Head of caudate nucleus (tissue), 42 donors: ENCODE measurements at regions of chr6 and their contacts with region 1.

Region 1: GRCh38 chr6:31366693-31367470 is 9.9 kb upstream of the HLA-B start:
- DNase-seq: peak; percentile 57 to 95 (median 90)

Region 2: DNA sequence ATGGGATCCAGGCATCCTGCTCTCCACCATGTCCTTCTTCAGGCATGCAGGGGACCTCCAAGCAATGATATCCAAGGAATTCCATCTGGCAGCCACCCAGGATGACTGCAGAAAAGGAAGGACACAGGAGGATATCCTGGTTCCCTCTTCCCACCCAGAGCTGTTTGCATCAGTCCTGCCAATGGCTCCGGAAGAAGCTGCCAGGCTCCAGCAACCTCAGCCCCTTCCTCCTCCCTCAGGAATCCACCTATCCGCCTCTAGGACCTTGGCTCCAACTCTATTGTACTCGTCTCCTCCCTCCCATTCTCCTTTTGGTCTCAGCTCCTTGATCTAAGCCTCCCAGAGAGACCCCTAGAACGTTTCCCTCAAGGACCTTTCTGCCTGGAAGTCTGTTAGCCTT is 227.3 kb before region 1 on chr6:
- intact Hi-C with region 1: loop called (anchors 5 kb)
- DNase-seq: no peak

Region 3: GRCh38 chr6:31271641-31272357 is 95.1 kb before region 1 on chr6 and contains the start of gene HLA-C:
- intact Hi-C with region 1: loop called (anchors 5 kb)
- DNase-seq: peak; percentile 71 to 97 (median 90)